ENCODE measurements at regions of chr12 and their contacts with region 1.

Region 1: DNA sequence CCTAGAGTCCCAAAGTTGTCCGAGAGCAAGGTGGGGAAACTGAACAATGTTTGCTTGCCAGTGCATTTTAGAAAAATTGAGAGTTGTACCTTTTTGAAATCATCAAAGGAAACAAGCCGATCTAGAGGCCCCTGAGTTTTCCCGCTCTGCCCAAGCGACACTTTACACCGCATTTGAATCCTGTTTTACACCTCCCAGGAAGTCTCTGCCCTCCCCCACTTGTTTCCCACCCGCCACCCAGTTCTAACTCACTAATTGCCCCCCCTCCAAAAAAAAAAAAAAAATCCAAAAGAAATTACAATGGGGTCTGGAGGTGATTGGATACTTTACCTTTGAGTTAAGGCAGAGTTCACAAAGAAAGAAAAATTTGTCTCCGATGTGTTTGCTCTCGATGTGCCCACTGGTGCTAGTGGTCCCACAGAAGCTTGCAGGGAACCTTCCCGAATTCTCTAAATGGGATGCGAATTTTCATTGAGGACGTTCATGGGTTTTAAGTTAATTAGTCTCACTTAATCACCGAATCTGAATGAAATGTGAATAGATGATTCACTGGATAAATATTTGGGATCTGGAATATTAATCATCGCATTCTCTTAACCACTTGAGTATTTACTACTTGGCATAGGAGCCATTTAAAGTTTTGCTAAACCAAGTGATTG is 2.4 kb downstream of the HMGA2 start:
- DNase-seq: no peak
- H3K4me3 ChIP-seq: peak overlapping the region; percentile 84 to 97 (median 91)
- H3K27ac ChIP-seq: peak overlapping the region; percentile 61 to 83
- H3K4me1 ChIP-seq: peaks cover 23 to 62% (median 47%) of the 10 kb centered on the region in 4 experiments
- H3K27me3 ChIP-seq: no peaks in the 10 kb centered on the region

Region 2: GRCh38 chr12:65787056-65787865 is 39.4 kb before region 1 on chr12:
- CTCF ChIA-PET with region 1: no interaction called
- POLR2A ChIA-PET with region 1: no interaction called
- DNase-seq: no peak
- H3K4me3 ChIP-seq: no peak overlapping the region
- H3K27ac ChIP-seq: no peak overlapping the region
- H3K4me1 ChIP-seq: no peaks in the 10 kb centered on the region
- H3K27me3 ChIP-seq: no peaks in the 10 kb centered on the region

Region 3: DNA sequence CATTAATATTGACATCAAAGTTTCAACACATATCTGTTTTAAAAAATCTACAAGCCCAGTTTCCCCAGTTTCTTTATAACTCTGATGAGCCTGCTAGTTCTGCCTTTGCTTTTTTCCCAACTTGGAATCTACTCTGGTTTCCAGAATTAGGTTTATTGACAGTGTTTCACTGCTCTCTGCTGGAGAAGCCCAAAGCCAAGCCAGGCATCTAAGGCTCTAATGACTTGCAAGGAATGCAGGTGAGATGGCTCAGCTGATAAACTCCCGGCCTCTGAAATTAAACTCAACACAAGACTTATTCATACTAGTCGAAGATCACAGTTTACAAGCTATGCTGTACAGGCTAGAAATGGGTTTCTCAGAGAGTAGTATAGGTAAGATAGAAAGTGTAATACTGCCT is 51.9 kb after region 1 on chr12:
- CTCF ChIA-PET with region 1: interaction called, 10 read pairs
- POLR2A ChIA-PET with region 1: interaction called, 4 read pairs
- DNase-seq: peak in 2 of 3 donors; percentile 36 to 42
- H3K4me3 ChIP-seq: peak overlapping the region in 4 of 7 experiments; percentile 73 to 94 (median 82)
- H3K27ac ChIP-seq: peak overlapping the region in 1 of 2 experiments; percentile 49
- H3K4me1 ChIP-seq: peaks cover 39 to 74% (median 51%) of the 10 kb centered on the region in 4 experiments
- H3K27me3 ChIP-seq: no peaks in the 10 kb centered on the region